Lower leg skin (tissue), 4 donors: ENCODE measurements at regions of chr10 and their contacts with region 1.

Region 1: GRCh38 chr10:56487746-56488145 is 126.7 kb upstream of the ZWINT start:
- DNase-seq: no peak
- H3K4me3 ChIP-seq: no peak overlapping the region
- CTCF ChIP-seq: no peak
- POLR2A ChIP-seq: no peak

Region 2: DNA sequence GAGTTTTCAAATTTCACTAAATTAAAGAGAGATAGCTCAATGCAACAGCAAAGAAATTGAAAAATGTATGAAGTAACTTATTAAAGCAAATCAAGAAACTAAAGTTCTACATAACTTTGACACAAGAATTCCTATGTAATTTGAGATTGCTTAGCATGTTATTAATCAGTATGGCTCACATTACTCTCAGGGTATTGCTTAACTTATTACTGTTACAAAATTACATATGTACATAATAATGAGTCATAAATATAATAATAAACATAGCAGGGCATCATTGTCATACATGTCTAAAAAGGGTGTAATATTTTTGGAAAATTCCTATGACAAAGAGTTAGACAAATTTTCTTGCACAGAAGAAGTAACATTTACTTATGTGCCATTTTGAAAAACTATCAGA is 201.7 kb before region 1 on chr10:
- intact Hi-C with region 1: no loop called
- DNase-seq: no peak
- H3K4me3 ChIP-seq: no peak overlapping the region
- CTCF ChIP-seq: no peak
- POLR2A ChIP-seq: no peak

Region 3: GRCh38 chr10:56507033-56507432 is 19.3 kb after region 1 on chr10:
- intact Hi-C with region 1: no loop called
- DNase-seq: no peak
- H3K4me3 ChIP-seq: no peak overlapping the region
- CTCF ChIP-seq: no peak
- POLR2A ChIP-seq: no peak

Region 4: DNA sequence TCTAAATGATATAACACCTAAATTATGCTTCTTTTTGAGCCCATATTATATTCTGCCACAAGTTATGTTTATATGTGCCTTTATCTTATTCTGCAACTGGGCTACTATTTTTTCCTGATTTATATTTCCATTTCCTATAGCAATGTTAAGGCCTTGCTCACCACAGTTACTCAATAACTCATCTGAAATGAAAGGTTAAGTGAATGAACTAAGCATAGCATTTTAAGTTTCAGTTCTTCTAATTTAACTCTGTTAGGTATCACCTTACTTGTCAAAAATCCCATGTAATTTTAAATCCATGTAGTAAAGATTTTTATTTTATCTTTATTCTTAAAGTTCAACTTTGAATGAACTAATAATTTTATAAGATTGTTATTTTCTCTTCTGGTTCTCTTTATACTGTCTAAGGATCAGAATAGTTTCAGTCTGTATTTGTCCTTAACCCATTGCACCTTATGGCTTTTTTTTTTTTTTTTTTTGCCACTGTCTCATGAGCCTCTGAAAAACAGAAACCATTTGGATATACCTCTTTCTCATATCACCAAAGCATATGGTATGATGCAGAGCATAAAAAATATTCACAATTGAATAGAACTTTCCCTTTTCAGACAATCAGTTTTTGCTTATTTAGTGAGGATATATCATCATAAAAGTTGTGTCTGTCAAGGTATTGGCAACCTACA is 175.2 kb after region 1 on chr10:
- intact Hi-C with region 1: no loop called
- DNase-seq: no peak
- H3K4me3 ChIP-seq: no peak overlapping the region
- CTCF ChIP-seq: no peak
- POLR2A ChIP-seq: no peak

Region 5: DNA sequence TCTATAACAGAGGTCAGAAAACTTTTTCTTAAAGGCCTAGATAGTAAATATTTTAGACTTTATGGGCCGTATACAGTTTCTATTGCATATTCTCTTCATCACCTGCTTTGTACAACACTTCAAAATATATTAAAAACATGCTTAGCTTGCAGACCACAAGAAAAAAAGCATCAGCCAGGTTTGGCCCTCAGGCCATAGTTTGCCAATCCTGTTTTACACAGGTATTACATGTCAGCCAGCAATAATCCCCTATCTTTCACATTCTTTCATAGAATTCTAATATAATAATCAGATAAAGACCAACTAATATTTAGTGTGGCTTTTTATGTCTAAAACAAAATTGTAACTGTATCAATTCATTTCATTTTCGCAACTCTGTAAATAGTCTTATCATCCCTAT is 481.6 kb after region 1 on chr10:
- intact Hi-C with region 1: no loop called
- DNase-seq: no peak
- H3K4me3 ChIP-seq: no peak overlapping the region
- CTCF ChIP-seq: no peak
- POLR2A ChIP-seq: no peak

Region 6: DNA sequence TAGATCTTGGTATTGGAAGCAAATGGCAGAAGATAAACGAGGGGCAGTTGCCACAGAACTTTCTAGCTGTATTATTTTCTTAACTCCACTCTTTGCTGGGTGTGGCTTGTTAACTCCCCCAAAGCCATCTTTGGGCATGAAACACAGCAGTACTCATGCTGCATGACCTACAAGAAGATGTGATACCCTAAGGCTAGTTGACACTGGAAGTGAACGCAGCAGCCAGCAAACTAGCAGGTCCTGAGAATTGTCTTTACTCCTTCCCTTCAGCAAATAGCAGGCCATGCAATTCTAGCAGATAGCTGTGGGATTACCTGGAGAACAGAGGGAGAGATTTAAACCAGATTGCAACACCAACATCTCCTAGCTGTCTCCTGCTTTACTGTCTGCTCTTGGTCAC is 561.3 kb after region 1 on chr10:
- intact Hi-C with region 1: loop called (anchors 10 kb)
- DNase-seq: no peak
- H3K4me3 ChIP-seq: no peak overlapping the region
- CTCF ChIP-seq: no peak
- POLR2A ChIP-seq: no peak